ENCODE measurements at regions of chr9 and their contacts with region 1.

Region 1: DNA sequence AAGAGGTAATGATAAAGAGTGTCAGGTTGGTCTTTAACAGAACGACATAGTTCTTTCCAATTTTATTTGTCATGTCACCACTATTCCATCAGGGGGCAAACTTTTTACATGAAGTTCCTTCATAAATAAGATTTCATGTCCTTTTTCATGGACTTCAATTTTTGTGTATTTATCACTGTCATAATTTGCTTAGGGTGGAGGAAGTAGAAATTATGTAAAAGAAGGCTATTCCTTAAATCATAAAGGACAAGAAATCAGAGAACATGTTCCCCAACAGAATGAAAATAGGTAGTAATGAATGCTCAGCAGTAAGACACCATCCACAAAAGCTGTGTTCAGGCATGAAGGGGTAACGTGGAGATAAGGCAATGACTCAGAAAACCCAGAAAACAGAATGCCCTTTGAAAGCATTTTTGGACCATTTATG is 72.7 kb downstream of the ZFAND5 start:
- DNase-seq: no peak
- H3K4me3 ChIP-seq: no peak overlapping the region
- H3K27ac ChIP-seq: peak overlapping the region; percentile 70
- H3K4me1 ChIP-seq: no peaks in the 10 kb centered on the region
- H3K27me3 ChIP-seq: no peaks in the 10 kb centered on the region
- CTCF ChIP-seq: peak; percentile 54

Region 2: DNA sequence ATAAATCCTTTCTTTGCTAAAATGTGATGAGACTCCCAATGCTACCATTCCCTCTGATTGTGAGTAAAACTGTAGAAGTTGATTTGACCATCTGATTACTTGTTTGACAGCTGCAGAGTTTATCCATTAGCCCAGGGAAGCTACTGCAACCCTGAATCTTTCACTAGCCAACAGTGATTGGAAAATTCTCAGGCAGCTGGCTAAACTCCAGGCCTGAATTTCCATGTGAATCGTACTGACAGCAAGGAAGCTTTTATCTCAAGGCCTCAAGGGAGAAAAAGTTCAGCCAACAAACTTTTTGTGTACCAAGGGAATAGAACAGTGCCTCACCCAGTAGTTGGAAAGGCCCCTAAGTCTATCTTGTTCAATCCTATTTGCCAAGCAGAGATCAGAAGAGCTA is 924.1 kb before region 1 on chr9:
- intact Hi-C with region 1: no loop called
- DNase-seq: peak; percentile 66
- H3K4me3 ChIP-seq: no peak overlapping the region
- H3K27ac ChIP-seq: no peak overlapping the region
- H3K4me1 ChIP-seq: no peaks in the 10 kb centered on the region
- H3K27me3 ChIP-seq: no peaks in the 10 kb centered on the region
- CTCF ChIP-seq: no peak

Region 3: DNA sequence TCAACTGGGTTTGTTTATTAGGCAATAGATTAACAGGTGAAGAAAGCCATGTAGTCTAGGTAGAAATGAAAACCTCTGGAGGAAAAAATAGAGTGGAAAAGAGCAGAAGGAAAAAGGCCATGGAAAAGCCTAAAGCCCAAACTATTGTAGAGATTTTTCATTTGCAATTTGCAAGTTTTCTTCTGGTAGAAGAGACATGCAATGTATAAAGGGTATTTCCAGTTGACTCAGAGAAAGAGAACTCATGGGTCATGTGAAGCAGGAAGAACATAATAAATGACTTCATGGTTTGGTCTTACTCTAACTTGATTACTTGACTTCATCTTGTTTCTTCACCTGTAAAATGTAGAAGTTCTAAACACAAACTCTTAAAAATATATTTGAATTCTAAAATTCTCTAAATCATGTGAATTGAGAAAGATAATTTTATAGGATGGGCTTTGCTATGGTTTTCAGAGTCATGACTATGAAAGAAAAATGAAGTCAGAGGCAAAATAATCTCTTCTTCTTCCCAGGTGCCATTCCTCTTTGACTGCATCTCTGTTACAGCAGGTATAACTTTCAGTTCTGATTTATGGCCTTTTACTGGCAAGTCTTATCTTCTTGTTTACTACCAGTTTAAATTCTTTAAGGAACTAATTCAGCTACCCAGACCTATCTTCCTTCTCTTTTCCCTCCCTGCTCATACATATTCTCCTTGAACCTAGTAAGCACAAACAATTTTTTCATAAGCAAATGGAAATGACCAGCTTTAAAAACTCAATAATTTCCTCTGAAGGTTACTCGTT is 181.4 kb after region 1 on chr9:
- intact Hi-C with region 1: loop called (anchors 10 kb)
- DNase-seq: no peak
- H3K4me3 ChIP-seq: no peak overlapping the region
- H3K27ac ChIP-seq: peak overlapping the region; percentile 70
- H3K4me1 ChIP-seq: peaks cover 18% of the 10 kb centered on the region
- H3K27me3 ChIP-seq: no peaks in the 10 kb centered on the region
- CTCF ChIP-seq: no peak

Region 4: DNA sequence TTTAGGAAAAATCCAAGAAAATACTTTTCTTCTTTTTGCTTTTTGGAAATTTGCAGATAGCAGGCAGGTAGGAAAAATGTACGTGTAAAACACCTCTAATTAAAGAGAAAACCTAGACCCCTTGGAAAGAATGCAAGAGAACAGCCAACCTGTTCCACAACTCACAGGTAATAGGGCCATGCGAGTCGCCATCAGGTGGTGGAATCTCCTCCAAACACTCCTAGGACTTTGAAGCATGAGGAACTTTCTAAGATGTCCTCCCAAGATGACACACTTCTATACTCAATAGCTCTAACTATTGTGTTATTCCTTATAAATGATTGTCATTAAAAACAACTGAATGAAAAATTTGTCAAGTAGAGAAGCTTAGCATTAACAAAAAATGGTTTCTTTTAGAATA is 403.1 kb after region 1 on chr9:
- intact Hi-C with region 1: no loop called
- DNase-seq: no peak
- H3K4me3 ChIP-seq: no peak overlapping the region
- H3K27ac ChIP-seq: no peak overlapping the region
- H3K4me1 ChIP-seq: no peaks in the 10 kb centered on the region
- H3K27me3 ChIP-seq: no peaks in the 10 kb centered on the region
- CTCF ChIP-seq: no peak